HCT116 (cell line): ENCODE measurements at regions of chr5 and their contacts with region 1.

Region 1: DNA sequence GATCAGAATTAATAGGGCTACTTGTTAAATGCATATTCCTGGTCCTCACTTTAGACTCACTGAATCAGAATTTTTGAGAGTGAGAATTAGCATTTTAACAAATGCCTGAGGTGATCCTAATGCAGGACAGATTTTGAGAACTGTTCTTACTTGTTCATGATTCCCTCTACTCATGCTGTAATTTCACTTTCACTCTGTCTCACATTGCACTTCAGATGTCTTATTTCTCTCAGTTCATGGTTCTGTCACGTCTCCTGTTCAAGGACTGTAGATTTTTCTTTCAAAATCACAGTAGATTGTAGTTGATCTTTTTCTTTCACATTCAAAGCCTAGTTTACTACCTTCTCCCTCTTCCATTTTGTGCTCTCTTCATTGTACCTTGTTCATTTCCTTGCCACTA is 54.3 kb downstream of the ADGRV1 start:
- DNase-seq: no peak
- ATAC-seq: no peak
- H3K4me3 ChIP-seq: no peak overlapping the region
- H3K27ac ChIP-seq: no peak overlapping the region
- H3K4me1 ChIP-seq: no peaks in the 10 kb centered on the region
- H3K27me3 ChIP-seq: peaks cover 12% of the 10 kb centered on the region; the same call in 1 of the 2 replicates
- CTCF ChIP-seq: no peak
- POLR2A ChIP-seq: no peak
- RAD21 ChIP-seq: no peak

Region 2: GRCh38 chr5:90184764-90185163 is 428.2 kb before region 1 on chr5:
- CTCF ChIA-PET with region 1: no interaction called
- POLR2A ChIA-PET with region 1: no interaction called
- RAD21 ChIA-PET with region 1: no interaction called
- intact Hi-C with region 1: no loop called
- DNase-seq: no peak
- ATAC-seq: no peak
- H3K4me3 ChIP-seq: no peak overlapping the region
- H3K27ac ChIP-seq: no peak overlapping the region
- H3K4me1 ChIP-seq: no peaks in the 10 kb centered on the region
- H3K27me3 ChIP-seq: no peaks in the 10 kb centered on the region
- CTCF ChIP-seq: no peak
- POLR2A ChIP-seq: no peak
- RAD21 ChIP-seq: no peak

Region 3: DNA sequence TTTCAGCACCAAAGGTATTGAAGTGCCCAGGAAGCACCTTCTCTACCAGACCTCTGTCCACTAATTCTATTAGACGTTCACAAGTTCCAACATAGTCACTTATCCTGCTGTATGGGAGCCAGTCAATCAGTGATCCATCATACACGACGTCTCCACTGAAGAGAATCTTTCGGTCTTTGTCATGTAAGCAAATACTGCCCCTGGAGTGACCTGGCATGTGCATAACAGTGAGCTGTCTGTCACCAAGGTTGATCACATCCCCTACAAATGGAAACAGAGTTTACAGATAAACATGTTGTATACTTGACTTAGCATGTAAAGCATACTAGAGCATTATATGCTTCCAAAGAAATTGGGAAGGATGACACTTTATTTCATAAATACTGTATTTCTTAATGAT is 151.6 kb before region 1 on chr5:
- CTCF ChIA-PET with region 1: no interaction called
- POLR2A ChIA-PET with region 1: no interaction called
- RAD21 ChIA-PET with region 1: no interaction called
- intact Hi-C with region 1: no loop called
- DNase-seq: no peak
- ATAC-seq: no peak
- H3K4me3 ChIP-seq: no peak overlapping the region
- H3K27ac ChIP-seq: no peak overlapping the region
- H3K4me1 ChIP-seq: no peaks in the 10 kb centered on the region
- H3K27me3 ChIP-seq: no peaks in the 10 kb centered on the region
- CTCF ChIP-seq: no peak
- POLR2A ChIP-seq: no peak
- RAD21 ChIP-seq: no peak

Region 4: DNA sequence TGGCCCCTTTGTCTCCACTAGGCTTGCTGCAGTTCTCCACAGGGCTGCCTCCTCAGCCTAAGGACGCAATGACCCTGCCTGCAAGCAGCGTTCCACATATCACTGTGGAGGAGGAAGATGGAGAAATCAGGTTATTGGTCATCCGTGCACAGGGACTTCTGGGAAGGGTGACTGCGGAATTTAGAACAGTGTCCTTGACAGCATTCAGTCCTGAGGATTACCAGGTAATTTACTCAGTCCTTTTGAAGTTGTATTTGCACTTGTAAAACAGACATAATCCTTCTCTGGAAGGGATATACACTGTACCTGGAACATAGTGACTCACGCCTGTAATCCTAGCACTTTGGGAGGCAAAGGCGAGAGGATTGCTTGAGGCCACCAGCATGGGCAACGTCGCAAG is 62.3 kb after region 1 on chr5:
- CTCF ChIA-PET with region 1: no interaction called
- POLR2A ChIA-PET with region 1: no interaction called
- RAD21 ChIA-PET with region 1: no interaction called
- intact Hi-C with region 1: loop called (anchors 10 kb)
- DNase-seq: no peak
- ATAC-seq: peak; percentile 79
- H3K4me3 ChIP-seq: no peak overlapping the region
- H3K27ac ChIP-seq: no peak overlapping the region
- H3K4me1 ChIP-seq: peaks cover 0 to 5% of the 10 kb centered on the region in 2 experiments; a peak in 1 of 4 replicates
- H3K27me3 ChIP-seq: no peaks in the 10 kb centered on the region
- CTCF ChIP-seq: no peak
- POLR2A ChIP-seq: no peak
- RAD21 ChIP-seq: no peak